ENCODE measurements at regions of chr14 and their contacts with region 1.

Region 1: GRCh38 chr14:98138666-98139065 is 1133.3 kb downstream of the BCL11B start:
- DNase-seq: no peak

Region 2: DNA sequence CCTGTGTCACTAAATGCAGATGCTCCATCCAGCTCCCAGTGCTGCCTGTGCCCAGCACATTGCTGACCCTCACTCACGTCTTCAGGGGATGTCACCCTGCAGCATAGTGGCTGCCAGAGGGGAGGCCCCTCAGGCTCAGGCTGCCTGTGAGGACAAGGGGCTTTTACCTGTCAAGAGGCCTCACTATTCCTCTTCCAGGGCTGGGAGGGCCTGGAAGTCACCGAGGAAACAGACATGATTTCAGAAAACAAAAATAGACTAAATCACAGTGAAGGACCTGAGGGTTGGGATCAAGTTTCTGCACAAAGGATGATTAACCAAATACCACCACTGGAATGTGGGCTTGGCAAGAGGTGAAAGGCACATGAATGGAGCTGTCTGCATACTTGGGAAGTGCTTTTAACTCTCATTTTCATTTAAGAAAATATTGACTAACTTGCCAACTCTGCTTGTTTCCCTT is 68.9 kb before region 1 on chr14:
- intact Hi-C with region 1: no loop called
- DNase-seq: no peak

Region 3: DNA sequence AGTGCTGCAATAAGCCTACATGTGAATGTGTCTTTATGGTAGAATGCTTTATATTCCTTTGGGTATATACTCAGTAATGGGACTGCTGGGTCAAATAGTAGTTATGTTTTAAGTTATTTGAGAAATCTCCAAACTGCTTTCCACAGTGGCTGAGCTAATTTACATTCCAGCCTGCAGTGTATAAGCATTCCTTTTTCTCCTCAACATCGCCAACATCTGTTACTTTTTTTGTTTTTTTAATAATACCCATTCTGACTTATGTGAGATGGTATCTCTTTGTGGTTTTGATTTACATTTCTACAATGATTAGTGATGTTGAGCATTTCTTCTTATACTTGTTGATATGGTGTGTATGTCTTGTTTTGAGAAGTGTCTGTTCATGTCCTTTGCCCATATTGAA is 52.9 kb before region 1 on chr14:
- intact Hi-C with region 1: no loop called
- DNase-seq: no peak

Region 4: DNA sequence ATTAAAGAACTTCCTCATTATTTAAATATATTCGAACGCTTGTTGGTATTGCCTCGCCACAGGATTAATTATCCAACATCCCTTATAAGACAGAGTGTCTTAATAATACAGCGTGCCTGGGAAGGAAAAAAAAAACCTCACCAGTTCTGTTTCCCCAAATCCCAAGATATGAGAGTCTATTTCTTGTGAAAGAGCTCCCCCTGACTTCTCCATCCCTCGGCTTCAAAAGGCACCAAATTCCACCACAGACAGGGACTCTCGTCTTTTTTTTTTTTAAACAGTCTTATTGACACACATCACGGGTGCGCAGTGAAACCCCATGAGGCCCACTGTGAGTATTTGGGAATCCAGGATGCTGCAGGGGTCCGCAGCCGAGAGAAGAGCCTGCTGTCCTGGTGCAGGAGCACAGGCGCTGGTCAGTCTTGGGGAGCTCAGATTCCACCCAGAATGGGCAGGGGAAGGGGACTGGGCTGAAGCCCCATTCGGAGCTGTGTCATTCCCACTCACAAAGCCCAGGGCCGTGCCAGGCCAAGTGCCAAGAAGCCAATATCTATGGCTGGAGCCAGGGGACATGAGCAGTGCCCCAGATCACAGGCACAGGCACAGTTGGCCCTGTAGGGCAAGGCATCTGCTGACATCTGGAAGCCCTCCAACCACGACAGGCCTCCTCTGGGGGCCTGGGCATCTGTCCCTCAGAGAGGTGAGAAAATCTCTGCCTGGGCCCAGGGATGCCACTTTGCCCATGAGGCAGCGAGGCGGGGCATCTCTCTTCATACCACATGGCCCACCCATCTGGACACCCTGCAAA is 1061.4 kb after region 1 on chr14:
- intact Hi-C with region 1: loop called (anchors 5 kb)
- DNase-seq: peak in 2 of 10 donors; percentile 64 to 76